ENCODE measurements at regions of chrX and their contacts with region 1.

Region 1: DNA sequence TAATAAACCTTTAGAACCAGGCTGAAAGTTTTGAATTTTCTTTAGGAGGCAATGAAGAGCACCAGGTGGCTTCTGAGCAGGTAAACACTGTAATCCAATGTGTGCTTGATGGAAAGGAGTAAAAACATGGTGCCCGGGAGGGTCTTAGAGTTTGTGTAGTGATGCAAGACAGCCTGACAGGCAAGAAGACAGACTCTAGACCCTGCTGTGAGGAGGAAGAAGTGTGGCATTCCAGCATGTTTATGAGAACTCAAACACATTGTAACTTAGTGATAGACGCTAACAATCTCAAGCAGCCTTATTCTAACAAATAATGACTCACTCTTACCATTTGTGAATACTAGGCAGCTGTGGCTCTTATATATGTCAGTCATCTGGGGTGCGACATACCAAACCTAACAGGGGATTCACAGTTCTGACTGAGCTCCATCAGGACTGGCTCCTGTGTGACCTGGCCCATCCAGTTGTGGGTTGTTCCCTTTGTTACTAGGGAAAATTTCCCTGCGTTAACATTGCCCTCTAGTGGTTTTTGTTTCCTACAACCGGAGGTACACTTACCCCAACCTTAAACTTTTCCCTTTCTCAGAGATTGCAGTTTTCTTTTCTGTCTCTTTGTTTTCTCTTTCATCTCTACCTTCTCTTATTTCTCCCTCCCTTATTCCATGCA is 53.8 kb downstream of the VSIG4 start:
- DNase-seq: no peak
- H3K4me3 ChIP-seq: no peak overlapping the region
- H3K27ac ChIP-seq: no peak overlapping the region
- H3K27me3 ChIP-seq: peaks cover 0 to 47% (median 5%) of the 10 kb centered on the region in 45 donors
- CTCF ChIP-seq: peak in 54 of 56 donors; percentile 23 to 74 (median 50)

Region 2: GRCh38 chrX:65581661-65582339 is 404.3 kb before region 1 on chrX:
- intact Hi-C with region 1: loop called (anchors 5 to 10 kb)
- DNase-seq: peak in 6 of 10 donors; percentile 9 to 58 (median 50)
- H3K4me3 ChIP-seq: peak overlapping the region in 1 of 59 donors; percentile 36
- H3K27ac ChIP-seq: no peak overlapping the region
- H3K27me3 ChIP-seq: peaks cover 0 to 70% (median 15%) of the 10 kb centered on the region in 45 donors
- CTCF ChIP-seq: peak; percentile 37 to 85 (median 74)

Measured in dorsolateral prefrontal cortex (tissue), 120 donors.